PC-3 (cell line): ENCODE measurements at regions of chr3 and their contacts with region 1.

Region 1: GRCh38 chr3:169990431-169990830 is 23.8 kb downstream of the SEC62 start:
- DNase-seq: no peak
- ATAC-seq: no peak
- H3K4me3 ChIP-seq: no peak overlapping the region
- H3K27ac ChIP-seq: no peak overlapping the region
- H3K4me1 ChIP-seq: no peaks in the 10 kb centered on the region
- H3K27me3 ChIP-seq: no peaks in the 10 kb centered on the region
- CTCF ChIP-seq: no peak

Region 2: GRCh38 chr3:170049146-170050072 is 59.0 kb after region 1 on chr3:
- CTCF ChIA-PET with region 1: interaction called, 4 read pairs
- POLR2A ChIA-PET with region 1: interaction called, 12 read pairs
- intact Hi-C with region 1: no loop called
- DNase-seq: peak; percentile 94
- ATAC-seq: peak; percentile 94
- H3K4me3 ChIP-seq: peak overlapping the region; percentile 37
- H3K27ac ChIP-seq: peak overlapping the region; percentile 84
- H3K4me1 ChIP-seq: peaks cover 42% of the 10 kb centered on the region
- H3K27me3 ChIP-seq: no peaks in the 10 kb centered on the region
- CTCF ChIP-seq: no peak